ENCODE measurements at regions of chr9 and their contacts with region 1.

Region 1: GRCh38 chr9:104911032-104911607 is 16.8 kb downstream of the ABCA1 start:
- DNase-seq: peak in 2 of 3 donors; percentile 42 to 56
- H3K4me3 ChIP-seq: no peak overlapping the region
- H3K4me3 Mint-ChIP-seq: no peak overlapping the region
- H3K27ac ChIP-seq: no peak overlapping the region
- H3K27ac Mint-ChIP-seq: peak overlapping the region in 2 of 7 donors; percentile 14 to 72
- H3K4me1 ChIP-seq: peaks cover 24 to 29% of the 10 kb centered on the region in 2 donors
- H3K4me1 Mint-ChIP-seq: peaks cover 42% of the 10 kb centered on the region
- H3K27me3 ChIP-seq: no peaks in the 10 kb centered on the region
- H3K27me3 Mint-ChIP-seq: peaks cover 0 to 2% (median 0%) of the 10 kb centered on the region in 3 donors
- CTCF ChIP-seq: no peak

Region 2: DNA sequence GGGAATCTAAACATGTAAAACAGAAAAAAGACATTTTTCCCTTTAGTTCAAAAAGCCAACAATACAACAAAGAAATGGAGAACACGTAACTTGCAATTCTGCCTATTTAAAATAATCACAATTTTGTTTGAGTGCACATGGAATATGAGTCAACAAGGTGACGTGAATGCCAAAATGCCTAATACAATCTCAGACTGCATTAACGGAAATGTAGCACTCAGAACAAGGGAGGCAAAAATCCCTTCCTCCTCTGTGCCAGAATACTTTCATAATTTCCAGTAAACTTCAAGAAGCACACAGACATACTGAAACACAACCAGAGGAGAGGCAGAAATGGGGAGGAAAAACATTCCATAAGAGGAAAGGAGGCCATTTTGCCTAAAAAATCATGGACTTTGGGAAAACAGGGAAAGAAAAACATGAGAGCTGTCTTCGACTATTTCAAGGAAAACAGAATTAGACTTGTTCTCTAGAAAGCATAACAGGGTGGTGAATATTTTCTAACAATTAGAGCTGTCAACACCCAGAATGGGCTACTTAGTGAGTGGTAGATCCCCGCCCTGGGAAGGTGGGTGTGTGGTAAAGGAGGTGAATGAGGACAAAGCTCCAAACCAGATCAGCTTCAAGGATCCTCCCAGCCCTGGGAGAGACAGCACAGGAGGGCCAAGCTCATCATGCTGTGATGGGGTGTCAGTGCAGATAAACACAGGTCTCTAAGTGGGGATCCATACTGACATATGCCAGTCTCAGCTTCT is 31.4 kb before region 1 on chr9:
- intact Hi-C with region 1: loop called (anchors 5 kb)
- DNase-seq: no peak
- H3K4me3 ChIP-seq: no peak overlapping the region
- H3K4me3 Mint-ChIP-seq: no peak overlapping the region
- H3K27ac ChIP-seq: no peak overlapping the region
- H3K27ac Mint-ChIP-seq: no peak overlapping the region
- H3K4me1 ChIP-seq: no peaks in the 10 kb centered on the region
- H3K4me1 Mint-ChIP-seq: peaks cover 7% of the 10 kb centered on the region
- H3K27me3 ChIP-seq: no peaks in the 10 kb centered on the region
- H3K27me3 Mint-ChIP-seq: peaks cover 1 to 2% (median 2%) of the 10 kb centered on the region in 3 donors
- CTCF ChIP-seq: no peak

Region 3: GRCh38 chr9:104968025-104968982 is 57.2 kb after region 1 on chr9:
- intact Hi-C with region 1: no loop called
- DNase-seq: peak; percentile 73 to 81 (median 74)
- H3K4me3 ChIP-seq: peak overlapping the region; percentile 58 to 82 (median 64)
- H3K4me3 Mint-ChIP-seq: peak overlapping the region; percentile 89 to 96
- H3K27ac ChIP-seq: peak overlapping the region; percentile 61 to 75
- H3K27ac Mint-ChIP-seq: peak overlapping the region; percentile 83 to 98 (median 96)
- H3K4me1 ChIP-seq: peaks cover 16 to 24% of the 10 kb centered on the region in 2 donors
- H3K4me1 Mint-ChIP-seq: peaks cover 16% of the 10 kb centered on the region
- H3K27me3 ChIP-seq: no peaks in the 10 kb centered on the region
- H3K27me3 Mint-ChIP-seq: peaks cover 0 to 2% (median 2%) of the 10 kb centered on the region in 3 donors
- CTCF ChIP-seq: no peak

Region 4: GRCh38 chr9:105264380-105264779 is 353.3 kb after region 1 on chr9:
- intact Hi-C with region 1: no loop called
- DNase-seq: peak; percentile 36 to 65 (median 59)
- H3K4me3 ChIP-seq: no peak overlapping the region
- H3K4me3 Mint-ChIP-seq: no peak overlapping the region
- H3K27ac ChIP-seq: no peak overlapping the region
- H3K27ac Mint-ChIP-seq: peak overlapping the region; percentile 5 to 66 (median 54)
- H3K4me1 ChIP-seq: peaks cover 8 to 10% of the 10 kb centered on the region in 2 donors
- H3K4me1 Mint-ChIP-seq: peaks cover 30% of the 10 kb centered on the region
- H3K27me3 ChIP-seq: no peaks in the 10 kb centered on the region
- H3K27me3 Mint-ChIP-seq: peaks cover 0 to 1% (median 0%) of the 10 kb centered on the region in 3 donors
- CTCF ChIP-seq: no peak